Right cardiac atrium (tissue), 5 donors: ENCODE measurements at regions of chr4 and their contacts with region 1.

Region 1: GRCh38 chr4:56424697-56425514 is 10.5 kb downstream of the PPAT start:
- DNase-seq: no peak
- ATAC-seq: no peak
- H3K4me3 ChIP-seq: peak overlapping the region; percentile 48
- H3K27ac ChIP-seq: no peak overlapping the region
- H3K4me1 ChIP-seq: no peaks in the 10 kb centered on the region
- H3K27me3 ChIP-seq: no peaks in the 10 kb centered on the region

Region 2: DNA sequence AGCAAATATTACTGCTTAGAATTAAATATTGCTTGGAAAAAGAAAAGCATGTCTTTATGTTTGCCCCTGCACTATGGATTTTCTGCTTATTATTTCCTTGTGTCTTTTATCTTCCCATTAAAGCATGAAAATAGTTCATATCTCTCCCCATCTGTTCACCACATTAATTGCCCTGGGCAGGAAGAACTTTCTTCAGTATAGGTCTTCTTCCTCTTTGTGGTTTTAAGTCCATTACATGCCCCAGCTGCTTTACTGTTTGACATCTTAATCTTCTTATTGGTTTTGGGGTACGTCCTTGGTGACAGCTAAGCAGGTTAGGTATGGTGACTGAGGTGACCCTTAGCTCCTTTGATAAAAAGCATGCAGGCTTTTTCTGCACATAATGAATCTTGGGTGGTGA is 195.0 kb before region 1 on chr4:
- intact Hi-C with region 1: no loop called
- DNase-seq: no peak
- ATAC-seq: no peak
- H3K4me3 ChIP-seq: no peak overlapping the region
- H3K27ac ChIP-seq: no peak overlapping the region
- H3K4me1 ChIP-seq: no peaks in the 10 kb centered on the region
- H3K27me3 ChIP-seq: no peaks in the 10 kb centered on the region

Region 3: GRCh38 chr4:56360071-56360470 is 64.8 kb before region 1 on chr4:
- intact Hi-C with region 1: no loop called
- DNase-seq: no peak
- ATAC-seq: no peak
- H3K4me3 ChIP-seq: no peak overlapping the region
- H3K27ac ChIP-seq: no peak overlapping the region
- H3K4me1 ChIP-seq: no peaks in the 10 kb centered on the region
- H3K27me3 ChIP-seq: no peaks in the 10 kb centered on the region

Region 4: GRCh38 chr4:56544573-56545131 is 119.7 kb after region 1 on chr4:
- intact Hi-C with region 1: loop called in 1 of 4 experiments (anchors 10 kb)
- DNase-seq: peak; percentile 84 to 95 (median 94)
- ATAC-seq: peak; percentile 99 to 100
- H3K4me3 ChIP-seq: peak overlapping the region; percentile 1
- H3K27ac ChIP-seq: no peak overlapping the region
- H3K4me1 ChIP-seq: no peaks in the 10 kb centered on the region
- H3K27me3 ChIP-seq: no peaks in the 10 kb centered on the region

Region 5: GRCh38 chr4:56977321-56978012 is 552.6 kb after region 1 on chr4 and contains the start of gene NOA1:
- intact Hi-C with region 1: no loop called
- DNase-seq: peak; percentile 97 to 99 (median 99)
- ATAC-seq: peak; percentile 92
- H3K4me3 ChIP-seq: peak within 1 kb of the TSS; percentile 99
- H3K27ac ChIP-seq: peak within 1 kb of the TSS; percentile 100
- H3K4me1 ChIP-seq: peaks cover 9% of the 10 kb centered on the region
- H3K27me3 ChIP-seq: no peaks in the 10 kb centered on the region
- total RNA-seq, gene NOA1: 8.4 to 12.5 (median 10.5) TPM

Region 6: GRCh38 chr4:57190601-57191481 is 765.9 kb after region 1 on chr4:
- intact Hi-C with region 1: no loop called
- DNase-seq: no peak
- ATAC-seq: peak in 1 of 2 donors; percentile 13
- H3K4me3 ChIP-seq: no peak overlapping the region
- H3K27ac ChIP-seq: no peak overlapping the region
- H3K4me1 ChIP-seq: no peaks in the 10 kb centered on the region
- H3K27me3 ChIP-seq: no peaks in the 10 kb centered on the region